WTC11 (cell line): ENCODE measurements at regions of chr17 and their contacts with region 1.

Region 1: GRCh38 chr17:10631048-10631700 is 25.9 kb downstream of the MYH3 start:
- DNase-seq: peak; percentile 69
- ATAC-seq: peak; percentile 58
- H3K4me3 Mint-ChIP-seq: no peak overlapping the region
- H3K27ac Mint-ChIP-seq: no peak overlapping the region
- H3K4me1 Mint-ChIP-seq: 0 out of 2 replicates have a peak, but pooled peaks cover 3% of the 10 kb centered on the region
- H3K27me3 Mint-ChIP-seq: no peaks in the 10 kb centered on the region
- CTCF ChIP-seq: peak; percentile 74

Region 2: DNA sequence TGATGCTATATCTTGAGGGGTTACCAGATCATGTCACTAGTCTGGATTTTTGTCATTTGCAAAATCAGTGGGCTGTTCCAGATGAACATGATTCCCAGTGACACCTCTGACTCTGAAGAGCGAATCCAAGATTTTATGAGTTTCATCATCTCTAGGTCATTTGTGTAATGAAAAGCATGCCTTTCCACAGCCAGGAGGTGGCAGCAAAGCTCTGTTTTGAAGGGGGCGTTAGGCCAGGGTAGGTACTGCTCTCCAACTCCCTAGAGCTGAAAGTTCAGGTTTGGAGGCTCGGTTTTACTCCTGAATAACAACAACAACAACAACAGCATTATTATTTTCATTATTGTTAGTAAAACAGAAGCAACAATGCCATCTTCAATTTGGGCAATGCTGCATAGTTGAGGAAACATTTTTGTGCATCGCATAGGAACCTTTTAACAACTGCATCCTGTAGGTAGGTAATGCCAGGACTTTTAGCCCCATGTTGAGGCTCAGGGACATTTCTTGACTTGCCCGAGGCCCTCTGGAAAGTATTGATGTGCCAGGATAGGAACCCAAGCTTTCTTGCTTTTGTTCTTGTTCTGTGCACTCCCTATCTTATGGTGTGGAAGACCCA is 335.3 kb before region 1 on chr17:
- CTCF ChIA-PET with region 1: interaction called, 15 read pairs
- POLR2A ChIA-PET with region 1: no interaction called
- DNase-seq: peak; percentile 80
- ATAC-seq: peak; percentile 92
- H3K4me3 Mint-ChIP-seq: no peak overlapping the region
- H3K27ac Mint-ChIP-seq: no peak overlapping the region
- H3K4me1 Mint-ChIP-seq: peaks cover 12% of the 10 kb centered on the region
- H3K27me3 Mint-ChIP-seq: no peaks in the 10 kb centered on the region; the same call in 1 of the 2 replicates
- CTCF ChIP-seq: peak; percentile 52

Region 3: DNA sequence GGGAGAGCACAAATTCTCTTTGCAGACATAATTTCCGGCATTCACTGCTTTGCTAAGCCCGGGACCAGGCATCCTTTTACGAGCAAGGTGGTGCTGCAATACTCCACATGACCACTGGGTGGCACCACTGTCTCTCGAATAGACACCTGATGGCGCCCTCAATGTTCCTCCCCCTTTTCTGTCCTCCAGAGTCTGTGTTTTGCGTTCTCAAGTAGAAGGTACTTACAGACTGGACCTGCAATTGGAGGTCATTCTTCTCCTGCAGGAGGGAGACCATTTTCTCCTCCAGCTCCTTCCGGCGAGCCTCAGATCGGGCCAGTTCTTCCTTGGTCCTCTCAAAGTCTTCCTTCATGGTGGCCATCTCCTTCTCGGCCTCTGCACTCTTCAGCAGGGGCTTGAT is 303.5 kb before region 1 on chr17:
- CTCF ChIA-PET with region 1: interaction called, 11 read pairs
- POLR2A ChIA-PET with region 1: no interaction called
- DNase-seq: peak; percentile 94
- ATAC-seq: peak; percentile 90
- H3K4me3 Mint-ChIP-seq: no peak overlapping the region
- H3K27ac Mint-ChIP-seq: no peak overlapping the region
- H3K4me1 Mint-ChIP-seq: 0 out of 2 replicates have a peak, but pooled peaks cover 5% of the 10 kb centered on the region
- H3K27me3 Mint-ChIP-seq: no peaks in the 10 kb centered on the region; the same call in 1 of the 2 replicates
- CTCF ChIP-seq: peak; percentile 99

Region 4: DNA sequence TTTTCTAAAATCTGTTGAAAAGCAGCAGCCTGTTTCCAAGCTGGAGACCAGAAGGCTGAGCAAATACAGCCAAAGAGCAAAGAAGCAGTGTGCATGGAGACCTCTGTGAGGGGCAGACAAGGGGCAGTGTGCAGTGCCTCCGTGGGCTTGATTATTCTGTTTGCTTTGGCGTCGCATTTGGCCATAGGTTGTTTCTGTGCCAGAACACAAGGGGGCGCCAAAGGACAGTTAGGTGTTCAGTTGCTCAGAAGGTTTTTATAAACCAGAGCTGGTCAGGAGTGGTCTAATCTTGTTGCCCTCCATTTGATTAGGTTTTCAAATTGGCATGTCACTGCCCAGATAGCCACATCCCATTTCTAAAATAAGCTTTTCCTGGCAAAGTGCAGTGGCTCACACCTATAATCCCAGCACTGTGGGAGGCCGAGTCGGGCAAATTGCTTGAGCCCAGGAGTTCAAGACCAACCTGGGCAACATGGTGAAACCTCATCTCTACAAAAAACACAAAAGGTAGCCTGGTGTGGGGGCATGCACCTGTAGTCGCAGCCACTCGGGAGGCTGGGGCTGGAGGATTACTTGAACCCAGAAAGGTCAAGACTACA is 15.3 kb after region 1 on chr17:
- CTCF ChIA-PET with region 1: interaction called, 63 read pairs
- POLR2A ChIA-PET with region 1: interaction called, 3 read pairs
- DNase-seq: peak; percentile 83
- ATAC-seq: peak; percentile 90
- H3K4me3 Mint-ChIP-seq: no peak overlapping the region
- H3K27ac Mint-ChIP-seq: no peak overlapping the region
- H3K4me1 Mint-ChIP-seq: no peaks in the 10 kb centered on the region
- H3K27me3 Mint-ChIP-seq: no peaks in the 10 kb centered on the region
- CTCF ChIP-seq: peak; percentile 67

Region 5: DNA sequence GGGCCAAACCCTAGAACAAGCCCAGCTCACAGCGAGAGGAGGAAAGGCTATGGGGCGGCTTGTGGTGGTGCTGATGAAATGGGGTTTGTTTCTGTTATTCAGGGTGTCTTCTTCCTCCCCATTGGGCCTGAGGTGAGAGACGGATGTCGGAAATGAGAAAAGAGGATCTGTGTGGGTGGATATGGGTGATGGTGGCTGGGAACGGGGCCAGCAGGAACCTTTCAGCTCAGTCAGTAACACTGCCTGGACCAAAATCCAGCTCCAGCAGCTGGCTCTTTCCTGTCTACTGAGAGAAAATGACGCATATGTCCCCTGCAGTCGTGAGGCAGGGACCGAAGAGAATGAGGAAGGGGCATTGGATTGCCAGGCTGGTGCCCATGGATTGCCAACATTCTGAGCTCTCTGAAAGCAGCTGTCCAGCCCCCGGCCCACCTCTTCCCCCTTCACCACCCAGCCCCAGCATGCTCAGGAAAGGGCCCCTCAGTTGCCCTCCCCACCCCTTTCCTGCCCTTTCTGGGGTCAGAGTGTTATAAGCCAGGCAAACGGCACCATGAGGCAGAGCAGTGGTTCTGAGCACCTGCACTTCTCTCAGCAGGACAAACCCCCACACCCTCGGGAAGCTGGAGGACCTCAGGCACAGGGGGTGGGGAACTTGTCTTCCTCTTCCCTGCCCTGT is 21.9 kb after region 1 on chr17:
- CTCF ChIA-PET with region 1: interaction called, 63 read pairs
- POLR2A ChIA-PET with region 1: no interaction called
- DNase-seq: no peak
- ATAC-seq: no peak
- H3K4me3 Mint-ChIP-seq: no peak overlapping the region
- H3K27ac Mint-ChIP-seq: no peak overlapping the region
- H3K4me1 Mint-ChIP-seq: no peaks in the 10 kb centered on the region
- H3K27me3 Mint-ChIP-seq: no peaks in the 10 kb centered on the region; the same call in 1 of the 2 replicates
- CTCF ChIP-seq: no peak

Region 6: GRCh38 chr17:10812674-10813073 is 181.5 kb after region 1 on chr17:
- CTCF ChIA-PET with region 1: no interaction called
- POLR2A ChIA-PET with region 1: no interaction called
- DNase-seq: no peak
- ATAC-seq: no peak
- H3K4me3 Mint-ChIP-seq: no peak overlapping the region
- H3K27ac Mint-ChIP-seq: no peak overlapping the region
- H3K4me1 Mint-ChIP-seq: no peaks in the 10 kb centered on the region
- H3K27me3 Mint-ChIP-seq: peaks cover 3% of the 10 kb centered on the region; the same call in 1 of the 2 replicates
- CTCF ChIP-seq: no peak